HEK293 (cell line): ENCODE measurements at regions of chr10 and their contacts with region 1.

Region 1: GRCh38 chr10:101141616-101142532 is 10.8 kb downstream of the TLX1 start:
- H3K4me3 ChIP-seq: no peak overlapping the region
- H3K27ac ChIP-seq: no peak overlapping the region
- H3K4me1 ChIP-seq: no peaks in the 10 kb centered on the region
- CTCF ChIP-seq: peak; percentile 88

Region 2: DNA sequence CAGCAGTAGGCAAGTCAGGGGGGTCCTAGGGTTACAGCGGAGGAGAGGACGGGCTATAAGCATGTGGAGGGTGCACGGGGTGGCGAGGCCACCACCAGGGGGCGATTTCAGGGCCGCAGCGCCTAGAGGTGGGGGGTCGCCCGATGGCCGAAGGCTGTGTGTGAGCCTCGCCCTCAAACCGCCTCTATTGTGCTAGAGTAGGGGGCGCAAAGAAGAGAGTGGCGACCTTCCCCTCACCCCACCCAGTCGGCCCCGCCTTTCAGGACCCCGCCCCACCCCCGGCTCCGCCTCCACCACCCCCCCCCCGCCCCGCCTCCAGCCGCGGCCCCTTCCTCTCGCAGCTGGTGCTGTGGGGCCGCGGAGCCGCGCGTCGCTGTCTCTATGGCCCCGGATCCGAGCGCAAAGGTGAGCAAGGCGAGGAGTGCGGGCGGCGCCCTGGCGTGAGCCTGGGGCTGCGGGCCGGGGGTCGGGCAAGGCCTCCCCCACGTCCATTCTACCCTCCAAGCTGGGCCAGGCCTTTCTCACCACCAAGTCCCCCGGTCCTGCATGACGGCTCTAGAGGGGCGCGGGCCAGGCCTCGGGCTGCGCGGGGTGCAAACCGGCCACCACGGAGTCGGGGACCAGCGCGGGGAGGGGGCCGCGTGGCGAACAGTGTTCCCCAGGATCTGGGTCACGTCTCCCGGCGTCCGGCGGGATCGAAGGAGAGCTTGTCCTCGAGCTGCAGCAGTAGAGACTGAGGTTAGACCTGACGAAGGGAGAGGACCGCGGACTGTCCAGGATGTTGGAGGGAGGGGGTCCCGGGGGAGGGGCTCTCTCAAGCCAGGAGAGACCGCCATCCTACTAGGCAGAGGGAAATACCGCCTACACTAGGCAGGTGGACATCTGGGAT is 172.4 kb before region 1 on chr10 and contains the start of gene SEMA4G:
- CTCF ChIA-PET with region 1: no interaction called
- POLR2A ChIA-PET with region 1: no interaction called
- H3K4me3 ChIP-seq: peak within 1 kb of the TSS; percentile 53
- H3K27ac ChIP-seq: no peak within 1 kb of the TSS; the same call in 1 of the 2 replicates
- H3K4me1 ChIP-seq: no peaks in the 10 kb centered on the region
- CTCF ChIP-seq: peak; percentile 84

Region 3: DNA sequence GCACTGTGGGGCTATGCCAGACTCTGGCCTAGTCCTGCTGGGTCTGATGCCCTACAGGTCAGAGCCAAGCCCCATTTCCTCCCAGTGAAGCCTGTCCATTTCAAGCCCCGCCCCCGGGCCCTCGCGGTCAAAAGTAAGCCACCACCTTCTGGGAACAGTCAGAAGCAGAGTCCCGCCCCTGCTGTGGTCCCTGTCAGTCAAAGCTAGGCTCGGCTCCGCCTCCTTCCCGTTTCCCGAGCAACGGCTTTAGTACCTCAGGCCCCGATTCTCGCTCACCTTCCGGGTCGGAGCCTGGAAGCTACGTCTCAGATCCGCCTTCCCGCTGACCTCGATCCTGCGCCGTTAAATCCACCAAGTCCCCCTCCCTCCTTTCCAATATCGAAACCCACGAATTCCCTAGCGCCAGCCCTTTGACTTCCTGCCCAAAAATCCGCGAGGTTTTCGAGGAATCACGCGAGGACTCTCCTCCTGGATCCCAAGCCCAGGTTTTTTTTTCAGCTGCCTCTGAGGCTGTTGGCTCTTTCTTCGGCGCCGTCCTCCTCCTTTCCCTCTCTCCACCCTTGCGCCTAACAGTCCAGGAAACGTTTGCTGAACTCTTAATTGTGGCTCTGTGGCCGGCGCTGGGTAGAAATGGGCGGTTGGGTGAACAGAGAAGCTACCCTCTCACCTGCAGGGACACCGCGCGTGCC is 99.1 kb before region 1 on chr10:
- CTCF ChIA-PET with region 1: interaction called, 68 read pairs
- POLR2A ChIA-PET with region 1: interaction called, 7 read pairs
- H3K4me3 ChIP-seq: peak overlapping the region; percentile 53
- H3K27ac ChIP-seq: peak overlapping the region; percentile 80
- H3K4me1 ChIP-seq: peaks cover 5% of the 10 kb centered on the region; the same call in 1 of the 2 replicates
- CTCF ChIP-seq: no peak

Region 4: DNA sequence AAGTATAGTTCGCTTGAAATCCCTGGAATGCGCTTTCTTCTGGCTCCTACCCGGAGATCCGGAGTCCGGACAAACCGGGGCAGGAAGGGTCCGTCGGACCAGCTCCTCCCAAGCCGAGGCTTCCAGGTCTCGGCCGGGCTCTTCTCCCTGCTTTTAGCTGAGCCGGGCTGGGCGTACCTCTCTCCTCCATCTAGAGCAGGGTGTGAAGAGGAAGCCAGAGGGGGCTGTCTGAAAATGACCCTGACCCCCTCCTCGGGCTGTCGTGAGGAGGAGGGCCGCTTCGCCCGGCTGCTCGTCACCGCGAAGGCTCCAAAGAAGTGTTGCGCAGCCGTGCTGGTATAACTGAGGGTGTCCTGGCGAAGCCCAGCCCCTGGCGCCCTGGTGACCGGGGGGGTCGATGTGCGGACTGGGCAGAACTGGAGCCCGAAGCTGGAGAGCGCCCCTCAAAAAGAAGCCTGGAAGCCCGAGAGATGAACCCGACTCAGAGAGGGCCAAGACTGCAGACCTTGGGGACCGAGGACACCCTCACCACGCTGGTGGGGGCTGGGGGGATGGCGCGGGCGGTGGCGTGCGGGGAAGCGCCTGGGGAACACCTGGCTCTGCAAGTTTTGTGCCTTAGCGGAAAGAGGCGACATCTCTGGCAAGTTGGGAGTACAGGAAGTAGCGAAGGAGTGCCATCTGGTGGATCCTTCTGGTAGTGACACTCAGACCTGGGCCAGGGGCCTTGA is 74.4 kb before region 1 on chr10:
- CTCF ChIA-PET with region 1: interaction called, 26 read pairs
- POLR2A ChIA-PET with region 1: interaction called, 8 read pairs
- H3K4me3 ChIP-seq: peak overlapping the region; percentile 49
- H3K27ac ChIP-seq: peak overlapping the region; percentile 66
- H3K4me1 ChIP-seq: peaks cover 15% of the 10 kb centered on the region
- CTCF ChIP-seq: peak; percentile 91

Region 5: GRCh38 chr10:101095542-101096213 is 46.2 kb before region 1 on chr10:
- CTCF ChIA-PET with region 1: interaction called, 506 read pairs
- POLR2A ChIA-PET with region 1: interaction called, 31 read pairs
- H3K4me3 ChIP-seq: no peak overlapping the region
- H3K27ac ChIP-seq: no peak overlapping the region
- H3K4me1 ChIP-seq: no peaks in the 10 kb centered on the region
- CTCF ChIP-seq: peak; percentile 91

Region 6: DNA sequence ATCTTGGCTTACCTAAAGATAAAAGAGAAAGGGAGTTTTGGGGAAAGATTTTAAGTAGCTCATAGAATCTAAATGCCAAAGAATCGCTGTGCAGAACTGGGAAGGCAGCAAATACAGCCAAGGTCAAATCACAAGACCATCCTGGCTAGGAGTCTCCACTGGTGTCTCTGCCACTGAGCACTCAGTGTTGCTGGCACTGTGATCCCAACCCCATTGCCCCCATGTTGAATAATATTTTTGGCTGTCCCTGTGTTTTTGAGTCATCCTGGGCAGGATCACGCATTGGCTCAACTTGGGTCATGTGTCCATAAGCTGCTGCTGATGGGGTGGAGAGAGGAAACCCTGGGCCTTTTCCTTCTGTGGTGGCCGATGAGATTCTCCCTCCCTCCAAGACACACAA is 10.4 kb after region 1 on chr10:
- CTCF ChIA-PET with region 1: interaction called, 28 read pairs
- POLR2A ChIA-PET with region 1: no interaction called
- H3K4me3 ChIP-seq: no peak overlapping the region
- H3K27ac ChIP-seq: no peak overlapping the region
- H3K4me1 ChIP-seq: no peaks in the 10 kb centered on the region
- CTCF ChIP-seq: no peak

Region 7: DNA sequence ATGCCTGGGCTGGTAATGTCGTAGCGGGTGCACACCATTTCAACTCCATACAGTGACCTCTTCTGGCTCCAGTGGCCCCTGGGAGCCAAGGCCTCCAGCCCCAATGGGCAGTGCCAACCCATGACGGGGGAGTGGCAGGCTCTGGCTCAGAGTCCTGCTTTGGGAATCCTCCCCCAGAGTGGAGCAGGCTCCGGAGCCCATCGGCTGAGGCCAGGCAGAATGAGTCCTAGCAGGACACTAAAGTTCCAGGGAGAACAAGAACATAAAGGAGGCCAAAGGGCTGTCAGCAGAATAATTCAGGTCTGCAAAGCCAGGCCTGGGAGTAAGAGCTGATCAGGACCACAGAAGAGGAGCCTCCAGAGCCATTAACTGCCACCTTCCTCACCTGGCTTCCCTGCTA is 54.0 kb after region 1 on chr10:
- CTCF ChIA-PET with region 1: no interaction called
- POLR2A ChIA-PET with region 1: no interaction called
- H3K4me3 ChIP-seq: no peak overlapping the region
- H3K27ac ChIP-seq: no peak overlapping the region
- H3K4me1 ChIP-seq: no peaks in the 10 kb centered on the region
- CTCF ChIP-seq: no peak